ENCODE measurements at regions of chr15 and their contacts with region 1.

Region 1: DNA sequence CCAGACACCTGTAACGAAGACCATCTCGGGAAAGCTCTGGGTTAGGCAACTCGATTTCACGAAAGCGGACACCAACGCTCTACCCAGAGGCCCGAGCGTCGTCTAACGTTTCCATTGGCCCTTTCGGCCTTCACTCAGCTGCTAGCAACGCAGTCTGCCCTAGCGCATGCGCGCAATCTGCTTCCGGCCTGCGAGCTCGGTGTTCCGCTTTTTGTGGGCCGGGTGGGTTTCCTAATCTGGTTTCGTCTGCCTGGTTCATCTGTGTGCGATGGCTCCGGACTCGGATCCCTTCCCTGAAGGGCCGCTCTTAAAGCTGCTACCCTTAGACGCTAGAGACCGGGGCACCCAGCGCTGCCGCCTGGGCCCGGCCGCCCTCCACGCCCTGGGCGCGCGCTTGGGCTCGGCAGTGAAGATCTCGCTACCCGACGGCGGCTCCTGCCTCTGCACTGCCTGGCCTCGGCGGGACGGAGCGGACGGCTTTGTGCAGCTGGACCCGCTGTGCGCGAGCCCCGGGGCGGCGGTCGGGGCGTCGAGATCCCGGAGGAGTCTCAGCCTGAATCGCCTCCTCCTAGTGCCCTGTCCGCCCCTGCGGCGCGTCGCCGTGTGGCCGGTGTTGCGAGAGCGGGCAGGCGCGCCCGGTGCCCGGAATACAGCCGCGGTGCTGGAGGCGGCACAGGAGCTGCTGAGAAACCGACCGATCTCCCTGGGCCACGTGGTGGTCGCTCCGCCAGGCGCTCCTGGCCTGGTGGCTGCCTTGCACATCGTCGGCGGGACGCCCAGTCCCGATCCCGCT is 24.0 kb upstream of the GATM start:
- DNase-seq: peak; percentile 93 to 99 (median 96)
- ATAC-seq: peak; percentile 93
- H3K4me3 ChIP-seq: peak overlapping the region; percentile 77
- H3K4me3 Mint-ChIP-seq: peak overlapping the region; percentile 97
- H3K27ac ChIP-seq: peak overlapping the region; percentile 72 to 88
- H3K27ac Mint-ChIP-seq: peak overlapping the region; percentile 95
- H3K4me1 ChIP-seq: peaks cover 20% of the 10 kb centered on the region
- H3K4me1 Mint-ChIP-seq: peaks cover 43% of the 10 kb centered on the region
- H3K27me3 ChIP-seq: no peaks in the 10 kb centered on the region
- H3K27me3 Mint-ChIP-seq: no peaks in the 10 kb centered on the region
- CTCF ChIP-seq: no peak

Region 2: DNA sequence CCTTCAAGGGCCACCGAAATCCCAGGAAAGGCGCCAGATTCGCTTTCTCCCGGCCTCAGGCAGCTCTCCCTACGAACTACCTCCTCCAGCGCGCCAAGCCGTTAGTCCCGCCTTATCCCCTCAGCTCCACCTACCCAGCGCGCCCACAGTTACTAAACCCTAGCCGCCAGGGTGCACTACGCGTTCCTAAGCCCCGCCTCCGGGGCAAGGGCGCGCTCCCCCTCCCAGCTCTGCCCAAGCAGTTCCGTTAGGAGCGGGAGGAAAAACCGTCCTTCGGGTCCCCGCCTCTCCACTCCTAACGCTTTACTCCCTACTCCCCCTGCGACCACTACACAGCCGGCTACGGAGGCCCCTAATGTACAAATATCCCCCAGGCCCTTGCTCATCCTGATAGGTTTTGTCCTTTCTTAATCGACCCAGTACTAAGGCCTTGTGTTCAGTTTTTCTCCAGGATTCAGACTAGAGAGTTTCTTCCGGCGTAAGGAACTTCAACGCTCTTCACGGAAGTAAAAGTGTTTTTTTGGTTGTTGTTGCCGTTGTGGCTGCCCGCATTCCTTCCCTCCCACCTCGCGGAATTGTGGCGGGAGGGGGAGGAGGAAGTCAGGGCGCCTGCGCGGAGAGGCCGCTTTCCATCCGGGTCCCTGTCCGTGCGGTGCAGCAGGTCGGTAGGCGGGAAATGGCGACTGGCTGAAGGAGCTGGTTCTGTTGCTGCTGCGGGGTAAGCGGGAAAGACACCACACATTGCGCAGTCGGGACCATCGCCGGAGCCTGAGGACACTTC is 975.2 kb before region 1 on chr15 and contains the start of gene CTDSPL2:
- CTCF ChIA-PET with region 1: no interaction called
- POLR2A ChIA-PET with region 1: interaction called, 3 read pairs
- intact Hi-C with region 1: loop called in 1 of 2 experiments (anchors 5 kb)
- DNase-seq: peak; percentile 87 to 96 (median 91)
- ATAC-seq: peak; percentile 95
- H3K4me3 ChIP-seq: peak within 1 kb of the TSS; percentile 72
- H3K4me3 Mint-ChIP-seq: peak within 1 kb of the TSS; percentile 99
- H3K27ac ChIP-seq: peak within 1 kb of the TSS; percentile 97 to 98
- H3K27ac Mint-ChIP-seq: peak within 1 kb of the TSS; percentile 99
- H3K4me1 ChIP-seq: peaks cover 24% of the 10 kb centered on the region
- H3K4me1 Mint-ChIP-seq: peaks cover 66% of the 10 kb centered on the region
- H3K27me3 ChIP-seq: no peaks in the 10 kb centered on the region
- H3K27me3 Mint-ChIP-seq: no peaks in the 10 kb centered on the region
- CTCF ChIP-seq: peak; percentile 24
- total RNA-seq, gene CTDSPL2: 106 to 113 TPM

Region 3: DNA sequence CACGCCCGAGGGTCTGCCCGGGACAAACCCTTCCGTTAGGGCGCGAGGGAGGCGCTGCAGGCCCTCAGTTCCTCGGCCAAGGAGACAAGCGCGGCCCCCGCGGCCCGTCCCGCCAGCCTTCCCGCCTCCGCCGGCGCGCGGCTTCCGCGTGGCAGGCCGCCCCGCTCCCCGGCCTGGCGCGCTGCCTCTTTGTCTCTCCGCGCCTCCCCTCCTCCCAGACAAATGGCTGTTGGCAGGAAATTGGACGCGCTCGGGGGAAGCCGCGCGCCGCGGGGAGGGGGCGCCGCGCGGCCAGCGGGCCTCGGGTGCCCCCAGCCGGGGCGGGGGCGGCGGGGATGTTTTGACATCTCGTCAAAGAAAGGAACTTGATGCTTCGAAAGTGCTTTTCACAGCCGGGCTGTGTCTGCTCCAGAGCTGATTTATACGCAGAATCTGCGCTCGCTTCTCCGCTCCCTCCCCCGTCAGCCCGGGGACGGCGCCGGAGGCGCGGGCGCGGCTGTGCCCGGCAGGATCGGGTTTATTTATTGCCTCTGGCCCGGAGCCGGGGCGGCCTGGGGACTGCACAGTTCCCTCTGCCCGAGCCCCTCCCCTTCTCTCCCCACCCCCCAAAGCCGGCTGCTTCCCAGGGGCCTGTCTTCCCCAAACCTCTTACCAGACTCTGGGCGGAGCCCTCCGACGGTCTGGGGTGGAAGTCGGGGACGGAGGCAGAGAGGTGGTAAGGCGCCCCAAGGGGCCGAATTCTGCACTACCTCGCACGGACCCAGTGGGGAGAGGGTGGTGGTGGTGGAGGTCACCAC is 235.3 kb before region 1 on chr15:
- CTCF ChIA-PET with region 1: interaction called, 8 read pairs
- POLR2A ChIA-PET with region 1: interaction called, 17 read pairs
- intact Hi-C with region 1: loop called (anchors 1 to 2 kb)
- DNase-seq: peak; percentile 69 to 91 (median 78)
- ATAC-seq: peak; percentile 90
- H3K4me3 ChIP-seq: peak overlapping the region; percentile 78
- H3K4me3 Mint-ChIP-seq: peak overlapping the region; percentile 85
- H3K27ac ChIP-seq: peak overlapping the region; percentile 73 to 83
- H3K27ac Mint-ChIP-seq: peak overlapping the region; percentile 89
- H3K4me1 ChIP-seq: peaks cover 29% of the 10 kb centered on the region
- H3K4me1 Mint-ChIP-seq: peaks cover 15% of the 10 kb centered on the region
- H3K27me3 ChIP-seq: no peaks in the 10 kb centered on the region
- H3K27me3 Mint-ChIP-seq: no peaks in the 10 kb centered on the region
- CTCF ChIP-seq: peak; percentile 65

Region 4: GRCh38 chr15:45205192-45205591 is 197.2 kb before region 1 on chr15:
- CTCF ChIA-PET with region 1: interaction called, 13 read pairs
- POLR2A ChIA-PET with region 1: interaction called, 52 read pairs
- intact Hi-C with region 1: loop called (anchors 1 to 2 kb)
- DNase-seq: peak in 12 of 14 experiments; percentile 26 to 82 (median 48)
- ATAC-seq: peak; percentile 9
- H3K4me3 ChIP-seq: no peak overlapping the region
- H3K4me3 Mint-ChIP-seq: peak overlapping the region; percentile 23
- H3K27ac ChIP-seq: no peak overlapping the region
- H3K27ac Mint-ChIP-seq: peak overlapping the region; percentile 37
- H3K4me1 ChIP-seq: peaks cover 18% of the 10 kb centered on the region
- H3K4me1 Mint-ChIP-seq: no peaks in the 10 kb centered on the region
- H3K27me3 ChIP-seq: no peaks in the 10 kb centered on the region
- H3K27me3 Mint-ChIP-seq: peaks cover 10% of the 10 kb centered on the region
- CTCF ChIP-seq: peak; percentile 48

Region 5: GRCh38 chr15:45307230-45307924 is 95.0 kb before region 1 on chr15:
- CTCF ChIA-PET with region 1: no interaction called
- POLR2A ChIA-PET with region 1: no interaction called
- intact Hi-C with region 1: loop called in 1 of 2 experiments (anchors 2 kb)
- DNase-seq: peak in 3 of 14 experiments; percentile 22 to 28 (median 23)
- ATAC-seq: no peak
- H3K4me3 ChIP-seq: no peak overlapping the region
- H3K4me3 Mint-ChIP-seq: peak overlapping the region; percentile 77
- H3K27ac ChIP-seq: no peak overlapping the region
- H3K27ac Mint-ChIP-seq: no peak overlapping the region
- H3K4me1 ChIP-seq: no peaks in the 10 kb centered on the region
- H3K4me1 Mint-ChIP-seq: peaks cover 6% of the 10 kb centered on the region
- H3K27me3 ChIP-seq: peaks cover 8 to 13% of the 10 kb centered on the region in 2 experiments
- H3K27me3 Mint-ChIP-seq: peaks cover 47% of the 10 kb centered on the region
- CTCF ChIP-seq: peak; percentile 44

Region 6: DNA sequence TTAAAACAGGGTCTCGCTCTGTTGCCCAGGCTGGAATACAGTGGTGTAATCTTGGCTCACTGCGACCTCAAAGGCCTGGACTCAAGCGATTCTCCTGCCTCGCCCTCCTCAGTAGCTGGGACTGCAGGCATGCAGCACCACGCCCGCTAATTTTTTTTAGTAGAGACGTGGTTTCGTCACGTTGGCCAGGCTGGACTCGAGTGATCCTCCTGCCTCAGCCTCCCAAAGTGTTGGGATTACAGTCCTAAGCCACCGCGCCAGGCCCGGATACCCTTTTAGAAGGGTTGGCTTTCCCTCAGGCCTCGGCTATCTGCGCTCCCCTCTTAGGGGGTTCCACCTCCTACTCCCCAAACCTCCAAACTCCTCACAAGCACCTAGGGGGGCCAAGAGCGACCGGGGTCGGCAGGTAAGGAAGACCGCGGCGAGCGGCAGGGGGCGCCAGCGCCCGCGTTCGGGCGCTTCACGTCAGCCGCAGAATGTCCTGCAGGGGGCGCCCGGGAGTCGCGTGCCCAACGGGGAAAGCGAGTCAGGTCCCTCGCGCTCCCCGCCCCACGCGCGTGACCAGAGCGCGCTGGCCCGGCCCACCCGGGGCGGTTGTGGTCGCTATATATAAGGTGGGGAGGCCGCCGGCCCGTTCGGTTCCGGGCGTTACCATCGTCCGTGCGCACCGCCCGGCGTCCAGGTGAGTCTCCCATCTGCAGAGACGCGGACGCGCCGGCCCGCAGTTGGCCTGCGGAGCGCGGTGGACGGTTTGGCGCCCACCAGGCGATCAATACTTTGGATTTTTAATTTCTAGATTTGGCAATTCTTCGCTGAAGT is 27.8 kb after region 1 on chr15:
- CTCF ChIA-PET with region 1: interaction called, 4 read pairs
- POLR2A ChIA-PET with region 1: no interaction called
- intact Hi-C with region 1: loop called in 1 of 2 experiments (anchors 2 kb)
- DNase-seq: peak; percentile 74 to 94 (median 84)
- ATAC-seq: peak; percentile 95
- H3K4me3 ChIP-seq: peak overlapping the region; percentile 45
- H3K4me3 Mint-ChIP-seq: no peak overlapping the region
- H3K27ac ChIP-seq: no peak overlapping the region
- H3K27ac Mint-ChIP-seq: no peak overlapping the region
- H3K4me1 ChIP-seq: peaks cover 10% of the 10 kb centered on the region
- H3K4me1 Mint-ChIP-seq: no peaks in the 10 kb centered on the region
- H3K27me3 ChIP-seq: peaks cover 0 to 6% of the 10 kb centered on the region in 2 experiments
- H3K27me3 Mint-ChIP-seq: peaks cover 3% of the 10 kb centered on the region
- CTCF ChIP-seq: peak; percentile 100

Region 7: GRCh38 chr15:45522328-45523160 is 120.2 kb after region 1 on chr15 and contains the start of gene SLC30A4:
- CTCF ChIA-PET with region 1: no interaction called
- POLR2A ChIA-PET with region 1: interaction called, 5 read pairs
- intact Hi-C with region 1: loop called in 1 of 2 experiments (anchors 2 kb)
- DNase-seq: peak; percentile 31 to 87 (median 54)
- ATAC-seq: peak; percentile 86
- H3K4me3 ChIP-seq: peak within 1 kb of the TSS; percentile 87
- H3K4me3 Mint-ChIP-seq: peak within 1 kb of the TSS; percentile 97
- H3K27ac ChIP-seq: no peak within 1 kb of the TSS
- H3K27ac Mint-ChIP-seq: peak within 1 kb of the TSS; percentile 73
- H3K4me1 ChIP-seq: peaks cover 19% of the 10 kb centered on the region
- H3K4me1 Mint-ChIP-seq: peaks cover 18% of the 10 kb centered on the region
- H3K27me3 ChIP-seq: no peaks in the 10 kb centered on the region
- H3K27me3 Mint-ChIP-seq: no peaks in the 10 kb centered on the region
- CTCF ChIP-seq: peak; percentile 54
- total RNA-seq, gene SLC30A4: 2.1 to 2.3 TPM

Measured in CD4-positive, alpha-beta T cell (primary cell).